ENCODE measurements at regions of chr22 and their contacts with region 1.

Region 1: GRCh38 chr22:17368554-17369438 is 464 bp upstream of the CECR2 start:
- DNase-seq: peak; percentile 62 to 83
- ATAC-seq: peak; percentile 73 to 78 (median 76)
- H3K4me3 ChIP-seq: peak overlapping the region; percentile 92
- H3K27ac ChIP-seq: peak overlapping the region; percentile 99
- H3K4me1 ChIP-seq: peaks cover 36% of the 10 kb centered on the region
- H3K27me3 ChIP-seq: no peaks in the 10 kb centered on the region
- CTCF ChIP-seq: no peak

Region 2: GRCh38 chr22:17095538-17095937 is 273.3 kb before region 1 on chr22:
- intact Hi-C with region 1: no loop called
- DNase-seq: no peak
- ATAC-seq: no peak
- H3K4me3 ChIP-seq: no peak overlapping the region
- H3K27ac ChIP-seq: no peak overlapping the region
- H3K4me1 ChIP-seq: no peaks in the 10 kb centered on the region
- H3K27me3 ChIP-seq: no peaks in the 10 kb centered on the region
- CTCF ChIP-seq: no peak

Region 3: GRCh38 chr22:17171313-17172171 is 197.3 kb before region 1 on chr22:
- intact Hi-C with region 1: loop called in 1 of 2 experiments (anchors 1 kb)
- DNase-seq: peak; percentile 93 to 96
- ATAC-seq: peak; percentile 90 to 97 (median 92)
- H3K4me3 ChIP-seq: peak overlapping the region; percentile 71
- H3K27ac ChIP-seq: peak overlapping the region; percentile 92
- H3K4me1 ChIP-seq: peaks cover 17% of the 10 kb centered on the region
- H3K27me3 ChIP-seq: no peaks in the 10 kb centered on the region
- CTCF ChIP-seq: peak; percentile 79

Region 4: GRCh38 chr22:17266251-17266971 is 102.4 kb before region 1 on chr22:
- intact Hi-C with region 1: loop called in 1 of 2 experiments (anchors 2 kb)
- DNase-seq: peak in 1 of 2 donors; percentile 64
- ATAC-seq: peak; percentile 18 to 53 (median 34)
- H3K4me3 ChIP-seq: no peak overlapping the region
- H3K27ac ChIP-seq: peak overlapping the region; percentile 97
- H3K4me1 ChIP-seq: peaks cover 26% of the 10 kb centered on the region
- H3K27me3 ChIP-seq: no peaks in the 10 kb centered on the region
- CTCF ChIP-seq: no peak

Region 5: GRCh38 chr22:17436382-17436980 is 67.7 kb after region 1 on chr22:
- intact Hi-C with region 1: loop called (anchors 2 to 5 kb)
- DNase-seq: no peak
- ATAC-seq: peak; percentile 53 to 80 (median 64)
- H3K4me3 ChIP-seq: peak overlapping the region; percentile 39
- H3K27ac ChIP-seq: peak overlapping the region; percentile 82
- H3K4me1 ChIP-seq: peaks cover 87% of the 10 kb centered on the region
- H3K27me3 ChIP-seq: no peaks in the 10 kb centered on the region
- CTCF ChIP-seq: no peak

Region 6: GRCh38 chr22:17477391-17477833 is 108.6 kb after region 1 on chr22:
- intact Hi-C with region 1: loop called in 1 of 2 experiments (anchors 5 kb)
- DNase-seq: peak; percentile 52 to 73
- ATAC-seq: peak; percentile 75 to 88 (median 84)
- H3K4me3 ChIP-seq: peak overlapping the region; percentile 36
- H3K27ac ChIP-seq: peak overlapping the region; percentile 71
- H3K4me1 ChIP-seq: peaks cover 57% of the 10 kb centered on the region
- H3K27me3 ChIP-seq: no peaks in the 10 kb centered on the region
- CTCF ChIP-seq: no peak

Region 7: GRCh38 chr22:17501679-17502285 is 133.0 kb after region 1 on chr22:
- intact Hi-C with region 1: loop called in 1 of 2 experiments (anchors 5 kb)
- DNase-seq: no peak
- ATAC-seq: peak; percentile 74 to 90 (median 78)
- H3K4me3 ChIP-seq: no peak overlapping the region
- H3K27ac ChIP-seq: peak overlapping the region; percentile 2
- H3K4me1 ChIP-seq: no peaks in the 10 kb centered on the region
- H3K27me3 ChIP-seq: no peaks in the 10 kb centered on the region
- CTCF ChIP-seq: peak; percentile 73

Region 8: DNA sequence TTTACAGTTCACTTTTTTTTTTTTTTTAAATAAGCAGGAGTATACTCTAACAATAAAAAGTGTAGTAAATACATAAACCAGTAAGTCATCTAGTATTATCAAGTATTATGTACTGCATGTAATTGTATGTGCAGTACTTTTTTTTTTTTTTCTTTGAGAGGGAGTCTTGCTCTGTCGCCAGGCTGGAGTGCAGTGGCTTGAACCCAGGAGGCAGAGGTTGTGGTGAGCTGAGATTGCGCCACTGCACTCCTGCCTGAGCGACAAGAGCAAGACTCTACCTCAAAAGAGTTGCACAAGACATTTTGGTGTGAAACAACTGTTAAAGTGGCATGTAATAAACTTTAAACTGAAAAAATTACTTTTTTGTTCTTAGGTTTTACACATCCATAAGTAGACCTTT is 286.5 kb after region 1 on chr22:
- intact Hi-C with region 1: no loop called
- DNase-seq: no peak
- ATAC-seq: no peak
- H3K4me3 ChIP-seq: no peak overlapping the region
- H3K27ac ChIP-seq: no peak overlapping the region
- H3K4me1 ChIP-seq: no peaks in the 10 kb centered on the region
- H3K27me3 ChIP-seq: no peaks in the 10 kb centered on the region
- CTCF ChIP-seq: no peak

Measured in psoas muscle (tissue), 8 donors.